Activated naive CD4-positive, alpha-beta T cell treated with anti-CD3 and anti-CD28 coated beads for 36 hours (primary cell): ENCODE measurements at regions of chr1 and their contacts with region 1.

Region 1: DNA sequence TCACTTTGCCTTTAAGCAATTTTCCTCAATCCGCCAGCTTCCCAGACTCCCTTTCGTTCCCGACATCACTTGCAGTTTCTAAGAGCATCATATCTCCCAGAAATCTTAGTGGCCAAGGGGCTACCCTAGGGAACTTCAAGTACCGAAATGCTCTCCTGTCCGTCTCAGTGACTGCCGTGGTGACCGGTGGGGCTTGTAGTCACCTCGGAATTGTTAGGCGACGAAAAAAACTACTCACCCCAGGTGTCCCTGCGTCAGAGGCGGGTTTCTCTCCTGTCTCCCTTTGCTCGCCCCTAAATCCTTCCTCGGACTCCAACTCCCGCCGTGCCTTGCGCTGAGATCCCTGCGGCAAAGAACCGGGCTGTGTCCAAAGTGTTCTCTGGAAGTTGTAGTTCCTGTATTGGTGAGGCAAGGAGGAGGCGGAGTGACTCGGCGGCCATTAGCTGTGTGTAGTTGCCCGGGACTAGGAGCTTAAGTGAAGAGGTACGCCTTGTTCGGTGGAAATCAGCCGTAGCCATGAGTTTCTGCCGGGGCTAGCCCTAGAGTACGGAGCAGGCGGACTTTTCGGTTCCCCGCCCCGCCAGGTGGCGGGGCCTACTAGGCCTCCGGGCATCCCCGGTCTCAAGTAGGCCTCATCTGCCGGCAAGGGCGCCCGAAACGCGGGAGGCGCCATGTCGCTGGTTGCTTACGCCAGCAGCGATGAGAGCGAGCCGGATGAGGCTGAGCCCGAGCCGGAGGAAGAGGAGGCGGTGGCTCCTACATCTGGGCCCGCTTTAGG is at the start of gene PRCC:
- DNase-seq: peak; percentile 99
- H3K4me3 Mint-ChIP-seq: no peak within 1 kb of the TSS
- H3K27ac Mint-ChIP-seq: no peak within 1 kb of the TSS
- H3K4me1 Mint-ChIP-seq: peaks cover 39% of the 10 kb centered on the region
- H3K27me3 Mint-ChIP-seq: no peaks in the 10 kb centered on the region
- total RNA-seq, gene PRCC: 55.2 to 55.8 TPM

Region 2: GRCh38 chr1:156689035-156689952 is 78.0 kb before region 1 on chr1:
- CTCF ChIA-PET with region 1: interaction called, 11 read pairs
- intact Hi-C with region 1: no loop called
- DNase-seq: peak; percentile 80
- H3K4me3 Mint-ChIP-seq: no peak overlapping the region
- H3K27ac Mint-ChIP-seq: no peak overlapping the region
- H3K4me1 Mint-ChIP-seq: peaks cover 28% of the 10 kb centered on the region
- H3K27me3 Mint-ChIP-seq: peaks cover 46% of the 10 kb centered on the region

Region 3: DNA sequence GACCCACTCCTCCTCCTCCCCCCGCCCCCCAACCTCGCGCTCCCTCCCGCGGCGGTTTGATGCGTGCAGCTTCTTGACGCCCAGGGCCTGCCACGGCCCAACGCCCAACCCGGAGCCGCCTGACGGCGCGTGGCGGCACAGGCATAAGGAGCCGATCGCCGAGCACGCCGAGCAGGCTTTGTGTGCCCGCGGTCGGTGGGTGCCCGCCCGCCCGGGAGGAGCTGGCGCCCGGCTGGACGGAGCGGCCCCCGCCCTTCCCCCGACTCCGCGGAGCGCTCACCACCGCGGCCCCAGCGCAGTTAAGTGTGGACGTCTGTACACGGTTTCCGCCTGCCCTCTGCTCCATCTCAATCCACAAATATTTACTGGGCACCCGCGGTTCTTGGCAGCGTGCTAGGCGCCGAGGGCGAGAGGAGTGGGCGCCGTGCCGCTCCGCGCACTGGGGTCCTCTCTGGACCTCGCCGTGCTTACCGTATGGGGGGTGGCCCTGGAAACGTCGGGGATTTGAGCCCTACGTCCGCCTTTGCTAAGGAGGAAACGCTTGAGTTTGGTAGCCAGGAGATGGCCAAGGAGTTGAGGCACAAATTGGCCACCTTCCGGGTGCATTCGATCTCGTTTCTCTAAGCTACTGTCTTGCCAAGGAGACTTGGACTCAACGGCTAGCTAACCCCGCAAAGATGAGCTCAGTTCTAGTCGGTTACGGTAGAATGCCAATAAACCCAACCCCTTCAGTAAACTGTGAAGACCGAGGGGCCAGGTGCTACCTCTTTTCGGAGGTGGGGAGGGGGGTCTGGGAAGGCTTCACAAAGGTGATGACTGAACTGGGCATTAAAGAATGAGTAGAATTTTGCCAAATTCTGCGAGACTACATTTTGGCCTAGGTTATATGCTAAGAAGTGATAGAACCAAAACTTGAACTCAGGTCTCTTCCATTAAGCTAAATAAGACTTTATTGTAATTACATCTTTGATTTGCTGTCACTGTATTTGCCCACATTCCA is 15.2 kb before region 1 on chr1:
- CTCF ChIA-PET with region 1: interaction called, 4 read pairs
- intact Hi-C with region 1: loop called (anchors 1 kb)
- DNase-seq: peak; percentile 98
- H3K4me3 Mint-ChIP-seq: peak overlapping the region; percentile 86
- H3K27ac Mint-ChIP-seq: peak overlapping the region; percentile 88
- H3K4me1 Mint-ChIP-seq: peaks cover 28% of the 10 kb centered on the region
- H3K27me3 Mint-ChIP-seq: no peaks in the 10 kb centered on the region

Region 4: DNA sequence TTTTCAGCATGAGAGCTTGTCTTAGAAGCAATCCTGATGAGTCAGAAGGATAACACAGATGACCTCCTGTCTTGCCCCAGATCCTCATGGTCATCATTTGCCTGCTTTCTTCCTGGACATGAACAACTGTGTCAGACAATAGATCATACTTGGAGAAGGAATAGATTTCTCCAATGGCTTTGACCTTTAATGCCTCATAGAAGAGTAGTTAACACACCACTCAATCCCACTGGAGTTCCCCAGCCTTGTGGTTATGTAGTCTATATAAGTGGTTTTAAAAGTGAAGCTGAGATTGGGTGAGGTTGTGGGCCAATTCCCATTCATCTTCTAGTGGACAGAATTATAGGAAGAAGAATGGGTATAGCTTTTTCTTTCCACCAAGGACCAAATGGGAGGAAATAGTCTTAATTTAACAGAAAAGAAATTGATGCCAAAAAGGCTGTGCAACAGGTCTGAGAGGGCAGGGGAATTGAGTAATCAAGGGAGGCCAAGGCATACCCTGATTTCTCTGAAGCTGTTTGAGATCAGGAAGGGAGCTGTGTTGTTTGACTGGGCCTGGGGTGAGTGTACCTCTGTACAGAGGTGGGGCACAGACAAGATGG is 14.4 kb after region 1 on chr1:
- CTCF ChIA-PET with region 1: no interaction called
- intact Hi-C with region 1: no loop called
- DNase-seq: no peak
- H3K4me3 Mint-ChIP-seq: no peak overlapping the region
- H3K27ac Mint-ChIP-seq: no peak overlapping the region
- H3K4me1 Mint-ChIP-seq: peaks cover 23% of the 10 kb centered on the region
- H3K27me3 Mint-ChIP-seq: no peaks in the 10 kb centered on the region

Region 5: GRCh38 chr1:156961709-156962108 is 194.4 kb after region 1 on chr1:
- CTCF ChIA-PET with region 1: no interaction called
- intact Hi-C with region 1: loop called (anchors 1 kb)
- DNase-seq: peak; percentile 63
- H3K4me3 Mint-ChIP-seq: no peak overlapping the region
- H3K27ac Mint-ChIP-seq: no peak overlapping the region
- H3K4me1 Mint-ChIP-seq: peaks cover 27% of the 10 kb centered on the region
- H3K27me3 Mint-ChIP-seq: no peaks in the 10 kb centered on the region